ENCODE measurements at regions of chr10 and their contacts with region 1.

Region 1: DNA sequence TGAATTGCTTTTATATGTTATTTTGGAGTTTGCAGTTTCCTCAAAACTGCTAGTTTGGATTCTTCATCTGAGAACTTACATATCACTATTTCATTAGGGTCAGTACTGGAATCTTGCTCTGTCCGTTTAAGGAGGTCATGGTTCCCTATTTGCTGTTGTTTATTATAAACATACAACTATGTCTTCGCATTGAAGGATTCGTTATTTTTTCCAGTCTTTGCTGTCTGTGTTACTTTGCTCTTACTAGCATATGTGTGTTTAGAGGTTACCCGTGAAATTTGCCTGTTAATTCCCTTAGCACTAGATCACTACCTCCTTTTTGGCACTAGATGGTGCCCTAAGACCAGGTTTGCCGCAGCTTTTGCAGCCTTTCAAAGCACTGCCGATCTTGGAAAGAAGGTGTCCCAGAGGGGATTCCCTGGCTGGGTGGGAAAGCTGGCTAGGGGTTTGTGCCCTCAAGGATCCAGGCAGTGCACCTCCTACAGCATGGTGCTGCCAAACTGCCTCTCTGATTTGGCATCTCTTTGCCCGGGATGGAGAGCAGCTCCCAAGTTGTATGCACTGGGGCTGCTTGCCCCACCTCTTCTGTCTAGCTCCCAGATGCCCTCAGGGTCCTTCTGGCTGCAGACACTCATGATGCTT is 103.1 kb upstream of the APBB1IP start:
- DNase-seq: peak; percentile 50
- H3K4me3 Mint-ChIP-seq: peak overlapping the region; percentile 84
- H3K27ac Mint-ChIP-seq: peak overlapping the region; percentile 81
- H3K4me1 Mint-ChIP-seq: peaks cover 14% of the 10 kb centered on the region
- H3K27me3 Mint-ChIP-seq: no peaks in the 10 kb centered on the region

Region 2: DNA sequence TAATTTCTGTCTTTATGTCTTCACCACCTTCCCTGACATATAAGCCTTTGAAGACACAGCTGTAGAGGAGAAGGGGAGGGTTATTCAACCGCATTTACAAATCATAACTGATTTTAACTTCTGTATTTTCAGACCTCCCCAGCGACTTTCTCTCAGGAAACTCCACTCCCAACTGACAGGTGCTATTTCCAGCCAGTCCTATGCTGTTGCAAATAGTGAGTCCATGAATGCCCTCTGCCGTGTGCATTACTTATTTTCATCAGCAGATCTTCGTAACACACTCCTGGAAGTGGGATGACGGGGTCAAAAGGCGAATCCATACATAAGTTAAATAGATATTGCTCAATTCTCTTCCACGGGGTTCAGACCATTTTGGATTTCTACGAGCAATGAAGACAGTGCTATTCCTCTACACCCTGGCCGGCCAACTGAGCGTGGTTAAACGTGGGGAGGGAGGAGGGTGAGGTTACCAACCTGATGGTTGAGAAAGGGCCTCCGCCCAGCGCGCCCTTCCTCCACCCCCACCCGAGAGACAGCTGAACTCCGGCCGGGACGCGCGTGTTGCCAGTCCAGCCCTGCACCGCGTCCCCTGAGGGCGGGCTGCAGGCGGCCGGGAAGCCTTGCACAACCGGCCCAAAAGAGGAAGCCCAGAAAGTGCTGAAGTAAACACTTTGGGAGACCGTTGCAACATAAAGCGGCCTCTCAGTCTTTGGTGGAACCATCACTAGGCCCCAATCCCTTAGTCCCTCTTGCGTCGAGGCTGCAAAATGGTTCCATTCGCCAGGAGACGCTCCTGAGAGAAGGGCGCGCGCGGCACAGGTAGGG is 102.8 kb after region 1 on chr10 and contains the start of gene APBB1IP:
- intact Hi-C with region 1: loop called (anchors 2 kb)
- DNase-seq: peak; percentile 40
- H3K4me3 Mint-ChIP-seq: peak within 1 kb of the TSS; percentile 95
- H3K27ac Mint-ChIP-seq: peak within 1 kb of the TSS; percentile 93
- H3K4me1 Mint-ChIP-seq: peaks cover 51% of the 10 kb centered on the region
- H3K27me3 Mint-ChIP-seq: no peaks in the 10 kb centered on the region
- total RNA-seq, gene APBB1IP: 39.6 and 43.6 TPM in 2 replicates

Region 3: DNA sequence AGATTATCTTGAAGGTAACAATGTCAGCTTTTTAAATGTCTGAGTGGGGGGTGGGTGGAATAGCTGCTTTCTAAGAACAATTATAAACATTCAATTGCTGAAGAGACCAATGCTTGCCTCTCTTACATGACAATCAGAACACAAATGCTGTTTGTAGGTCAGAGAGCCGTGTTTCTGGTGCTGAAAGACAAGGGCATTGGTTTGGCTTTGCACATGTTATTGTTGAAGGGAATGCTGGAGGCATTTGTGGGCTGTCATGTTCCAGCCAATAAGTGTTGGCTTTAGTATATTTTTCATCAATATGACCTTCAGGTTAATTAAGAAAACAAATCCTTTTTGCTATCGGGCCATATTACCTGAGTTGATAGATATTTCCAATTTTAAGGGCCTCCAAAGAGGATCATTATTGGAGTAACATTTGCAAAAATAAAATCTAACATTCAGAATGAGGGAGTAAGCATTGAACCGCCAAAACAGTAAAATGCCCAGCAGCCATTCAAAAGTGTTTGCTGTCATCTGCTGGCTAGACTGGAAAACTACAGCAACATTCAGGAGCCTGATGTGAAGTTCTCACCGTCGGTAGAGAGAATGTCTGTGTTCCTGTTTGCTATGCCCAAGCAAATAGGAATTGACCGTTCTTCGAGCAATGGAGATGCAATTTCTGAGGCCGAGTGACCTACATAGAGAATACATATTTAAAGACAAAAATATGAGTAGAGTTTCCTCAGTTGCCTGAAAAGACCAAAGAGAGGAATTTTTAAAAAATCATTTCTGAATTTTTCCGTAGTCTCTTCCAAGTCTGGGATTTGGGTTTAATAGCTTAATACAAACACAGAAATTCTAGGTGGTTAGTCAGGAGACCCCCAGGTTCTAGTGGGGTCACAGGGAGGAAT is 221.9 kb after region 1 on chr10:
- intact Hi-C with region 1: loop called (anchors 1 kb)
- DNase-seq: no peak
- H3K4me3 Mint-ChIP-seq: no peak overlapping the region
- H3K27ac Mint-ChIP-seq: no peak overlapping the region
- H3K4me1 Mint-ChIP-seq: peaks cover 8% of the 10 kb centered on the region
- H3K27me3 Mint-ChIP-seq: no peaks in the 10 kb centered on the region

Region 4: DNA sequence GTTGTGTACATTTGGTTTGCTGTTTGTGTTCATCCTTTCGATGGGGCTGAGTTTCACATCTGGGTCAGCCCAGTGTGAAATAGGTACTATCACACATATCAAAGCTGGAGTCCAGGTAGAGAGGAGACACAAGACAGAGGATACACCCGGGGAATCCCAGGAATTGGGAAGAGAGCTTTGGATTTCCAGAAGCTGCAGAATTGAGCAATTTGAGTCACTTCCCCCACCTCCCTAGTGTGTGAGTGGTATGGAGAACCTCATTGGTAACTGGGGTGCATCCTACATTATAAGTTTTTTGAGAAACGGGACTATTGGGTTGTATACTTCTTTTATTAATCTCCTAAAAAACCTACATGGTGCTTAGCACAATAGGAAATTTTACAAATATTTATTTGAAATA is 350.4 kb after region 1 on chr10:
- intact Hi-C with region 1: loop called (anchors 2 kb)
- DNase-seq: no peak
- H3K4me3 Mint-ChIP-seq: no peak overlapping the region
- H3K27ac Mint-ChIP-seq: no peak overlapping the region
- H3K4me1 Mint-ChIP-seq: peaks cover 31% of the 10 kb centered on the region
- H3K27me3 Mint-ChIP-seq: no peaks in the 10 kb centered on the region

Region 5: GRCh38 chr10:26881600-26882331 is 546.7 kb after region 1 on chr10:
- intact Hi-C with region 1: loop called (anchors 1 kb)
- DNase-seq: no peak
- H3K4me3 Mint-ChIP-seq: no peak overlapping the region
- H3K27ac Mint-ChIP-seq: no peak overlapping the region
- H3K4me1 Mint-ChIP-seq: peaks cover 6% of the 10 kb centered on the region
- H3K27me3 Mint-ChIP-seq: peaks cover 17% of the 10 kb centered on the region

Measured in activated T-helper 1 cell treated with anti-CD3 and anti-CD28 coated beads, Interleukin-12 subunit alpha, Interleukin-12 subunit beta, Interleukin-2, Interleukin-4 antibody, amounts not matched to agents 30 ng/mL and 10 ng/mL and 1 ng/mL, durations not matched to agents 14 hours and 24 hours and 36 hours (primary cell).